Panc1 (cell line): ENCODE measurements at regions of chr18 and their contacts with region 1.

Region 1: DNA sequence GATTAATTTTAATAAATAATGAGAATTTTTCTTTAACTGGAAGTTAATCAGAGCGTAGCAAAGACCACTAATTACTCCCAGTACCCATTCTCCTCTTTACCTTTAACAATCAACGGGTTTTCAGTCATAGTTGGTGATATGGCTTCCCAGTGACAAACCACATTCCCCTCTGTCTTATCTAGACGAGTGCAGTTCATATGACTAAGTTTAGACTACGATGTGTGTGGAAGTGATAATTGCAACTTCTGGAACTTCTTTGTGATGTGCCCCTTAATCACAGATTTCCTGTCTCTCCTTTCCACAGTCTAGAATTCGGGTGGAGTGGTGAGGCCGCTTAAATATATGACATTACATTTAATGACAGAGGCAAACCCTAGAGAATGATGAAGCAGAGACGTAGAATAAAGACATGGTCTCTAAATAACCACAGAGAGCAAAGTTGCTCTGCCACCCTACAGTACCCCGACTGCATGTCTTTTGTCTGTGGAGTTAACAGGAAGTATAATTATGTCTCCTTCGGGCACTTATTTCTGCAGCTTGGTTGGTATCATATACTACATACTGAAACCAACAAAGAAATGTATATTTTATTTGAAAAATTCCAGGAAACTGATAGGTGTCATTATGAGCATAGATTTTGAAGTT is 693.3 kb upstream of the CDH7 start:
- DNase-seq: no peak
- ATAC-seq: no peak
- H3K4me3 ChIP-seq: peak overlapping the region; percentile 4 to 9; a peak in 2 of 4 replicates
- H3K27ac ChIP-seq: no peak overlapping the region
- H3K4me1 ChIP-seq: no peaks in the 10 kb centered on the region
- H3K27me3 ChIP-seq: no peaks in the 10 kb centered on the region
- CTCF ChIP-seq: no peak

Region 2: GRCh38 chr18:64983497-64984238 is 73.9 kb before region 1 on chr18:
- CTCF ChIA-PET with region 1: no interaction called
- POLR2A ChIA-PET with region 1: interaction called, 18 read pairs
- in situ Hi-C with region 1: no loop called
- intact Hi-C with region 1: no loop called
- DNase-seq: no peak
- ATAC-seq: no peak
- H3K4me3 ChIP-seq: no peak overlapping the region
- H3K27ac ChIP-seq: no peak overlapping the region
- H3K4me1 ChIP-seq: no peaks in the 10 kb centered on the region
- H3K27me3 ChIP-seq: no peaks in the 10 kb centered on the region
- CTCF ChIP-seq: no peak

Region 3: GRCh38 chr18:65706646-65707045 is 649.1 kb after region 1 on chr18:
- CTCF ChIA-PET with region 1: no interaction called
- POLR2A ChIA-PET with region 1: no interaction called
- in situ Hi-C with region 1: no loop called
- intact Hi-C with region 1: no loop called
- DNase-seq: no peak
- ATAC-seq: no peak
- H3K4me3 ChIP-seq: no peak overlapping the region
- H3K27ac ChIP-seq: no peak overlapping the region
- H3K4me1 ChIP-seq: no peaks in the 10 kb centered on the region
- H3K27me3 ChIP-seq: no peaks in the 10 kb centered on the region
- CTCF ChIP-seq: no peak